ENCODE measurements at regions of chr14 and their contacts with region 1.

Region 1: GRCh38 chr14:75002392-75003249 is at the start of gene EIF2B2:
- DNase-seq: peak; percentile 97
- ATAC-seq: peak; percentile 96
- H3K4me3 Mint-ChIP-seq: peak within 1 kb of the TSS; percentile 99
- H3K27ac Mint-ChIP-seq: peak within 1 kb of the TSS; percentile 96
- H3K4me1 Mint-ChIP-seq: peaks cover 25% of the 10 kb centered on the region
- H3K27me3 Mint-ChIP-seq: no peaks in the 10 kb centered on the region
- CTCF ChIP-seq: no peak
- total RNA-seq, gene EIF2B2: 36.6 and 37.2 TPM in 2 replicates

Region 2: DNA sequence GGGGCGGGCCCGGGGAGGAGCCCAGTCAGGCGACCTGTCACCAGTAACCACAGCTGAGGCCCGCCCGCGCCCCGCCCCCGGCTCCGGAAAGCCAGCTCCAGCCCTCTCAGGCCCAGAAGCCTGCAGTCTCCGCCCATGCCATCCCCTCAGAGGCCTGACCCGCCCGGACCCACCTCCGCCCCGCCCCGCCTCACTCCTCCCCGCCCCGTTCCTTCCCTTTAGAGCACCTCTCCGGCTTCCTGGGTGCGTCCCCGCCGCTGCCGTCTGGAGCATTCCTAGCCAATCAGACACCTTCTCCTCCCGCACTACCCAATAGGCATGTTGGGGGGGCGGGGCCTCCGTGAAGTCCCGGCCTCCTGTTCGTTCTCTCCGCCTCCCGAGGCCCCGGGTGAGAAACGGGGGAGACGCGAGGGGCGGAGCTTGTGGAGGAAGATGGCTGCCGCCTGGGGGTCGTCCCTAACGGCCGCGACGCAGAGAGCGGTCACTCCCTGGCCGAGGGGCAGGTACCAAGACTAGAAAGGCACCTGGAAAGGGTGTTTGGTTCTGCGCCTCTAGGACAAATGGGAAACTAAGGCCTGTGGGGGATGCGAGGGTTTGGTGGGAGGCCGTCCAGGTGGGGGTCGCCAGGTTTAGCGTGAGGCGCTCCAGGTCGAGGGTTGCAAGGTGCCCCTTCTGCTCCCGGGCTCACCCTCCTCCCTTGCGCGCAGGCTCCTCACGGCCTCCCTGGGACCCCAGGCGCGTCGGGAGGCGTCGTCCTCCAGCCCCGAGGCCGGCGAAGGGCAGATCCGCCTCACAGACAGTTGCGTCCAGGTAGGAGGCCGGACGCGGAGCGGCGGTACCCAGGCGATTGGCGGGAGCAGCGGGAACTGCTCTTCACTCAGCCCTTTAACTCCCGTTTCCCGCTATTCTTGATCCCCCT is 509.0 kb before region 1 on chr14 and contains the start of gene ISCA2:
- CTCF ChIA-PET with region 1: no interaction called
- POLR2A ChIA-PET with region 1: no interaction called
- intact Hi-C with region 1: loop called (anchors 1 kb)
- DNase-seq: peak; percentile 98
- ATAC-seq: peak; percentile 90
- H3K4me3 Mint-ChIP-seq: no peak within 1 kb of the TSS
- H3K27ac Mint-ChIP-seq: no peak within 1 kb of the TSS
- H3K4me1 Mint-ChIP-seq: peaks cover 34% of the 10 kb centered on the region
- H3K27me3 Mint-ChIP-seq: no peaks in the 10 kb centered on the region
- CTCF ChIP-seq: no peak
- total RNA-seq, gene ISCA2: 35.0 and 35.3 TPM in 2 replicates

Region 3: DNA sequence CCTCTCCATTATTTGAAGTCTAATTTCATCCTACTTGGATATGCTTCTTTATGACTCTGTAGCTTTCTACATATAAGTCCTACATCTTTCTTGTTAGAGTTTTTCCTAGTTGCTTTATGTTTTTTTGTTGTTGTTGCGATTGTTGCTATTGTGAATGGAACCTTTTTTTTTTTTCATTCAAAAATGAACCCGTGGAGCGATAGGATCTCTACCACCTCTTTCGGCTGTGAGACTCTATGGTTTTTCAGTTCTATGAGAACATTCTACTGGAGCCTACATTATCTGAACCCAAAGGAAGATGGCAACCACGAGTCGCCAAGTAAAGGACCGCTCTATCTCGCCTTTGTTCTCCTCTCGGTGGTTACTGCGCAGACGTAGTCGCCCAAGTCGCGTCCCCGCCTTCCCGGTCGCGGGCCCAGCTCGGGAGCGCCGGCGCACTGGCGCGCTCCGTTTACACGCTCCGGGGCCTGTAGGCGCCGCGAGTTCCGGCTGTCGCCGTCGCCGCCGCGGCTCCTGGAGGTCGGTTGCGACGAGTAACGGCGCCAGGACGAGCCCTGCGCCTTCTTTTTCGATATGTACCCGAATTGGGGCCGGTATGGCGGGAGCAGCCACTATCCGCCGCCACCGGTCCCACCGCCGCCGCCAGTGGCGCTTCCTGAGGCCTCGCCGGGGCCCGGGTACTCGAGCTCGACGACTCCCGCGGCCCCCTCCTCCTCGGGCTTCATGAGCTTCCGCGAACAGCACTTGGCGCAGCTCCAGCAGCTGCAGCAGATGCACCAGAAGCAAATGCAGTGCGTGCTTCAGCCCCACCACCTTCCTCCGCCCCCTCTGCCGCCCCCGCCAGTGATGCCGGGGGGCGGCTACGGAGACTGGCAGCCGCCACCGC is 239.5 kb before region 1 on chr14 and contains the start of gene YLPM1:
- CTCF ChIA-PET with region 1: no interaction called
- POLR2A ChIA-PET with region 1: interaction called, 6 read pairs
- intact Hi-C with region 1: loop called (anchors 1 kb)
- DNase-seq: peak; percentile 86
- ATAC-seq: peak; percentile 95
- H3K4me3 Mint-ChIP-seq: peak within 1 kb of the TSS; percentile 90
- H3K27ac Mint-ChIP-seq: peak within 1 kb of the TSS; percentile 90
- H3K4me1 Mint-ChIP-seq: peaks cover 55% of the 10 kb centered on the region
- H3K27me3 Mint-ChIP-seq: no peaks in the 10 kb centered on the region
- CTCF ChIP-seq: no peak
- total RNA-seq, gene YLPM1: 68.5 and 85.9 TPM in 2 replicates

Region 4: GRCh38 chr14:74913986-74914573 is 88.5 kb before region 1 on chr14:
- CTCF ChIA-PET with region 1: no interaction called
- POLR2A ChIA-PET with region 1: no interaction called
- intact Hi-C with region 1: loop called (anchors 1 kb)
- DNase-seq: no peak
- ATAC-seq: peak; percentile 50
- H3K4me3 Mint-ChIP-seq: no peak overlapping the region
- H3K27ac Mint-ChIP-seq: no peak overlapping the region
- H3K4me1 Mint-ChIP-seq: no peaks in the 10 kb centered on the region
- H3K27me3 Mint-ChIP-seq: no peaks in the 10 kb centered on the region
- CTCF ChIP-seq: no peak

Region 5: DNA sequence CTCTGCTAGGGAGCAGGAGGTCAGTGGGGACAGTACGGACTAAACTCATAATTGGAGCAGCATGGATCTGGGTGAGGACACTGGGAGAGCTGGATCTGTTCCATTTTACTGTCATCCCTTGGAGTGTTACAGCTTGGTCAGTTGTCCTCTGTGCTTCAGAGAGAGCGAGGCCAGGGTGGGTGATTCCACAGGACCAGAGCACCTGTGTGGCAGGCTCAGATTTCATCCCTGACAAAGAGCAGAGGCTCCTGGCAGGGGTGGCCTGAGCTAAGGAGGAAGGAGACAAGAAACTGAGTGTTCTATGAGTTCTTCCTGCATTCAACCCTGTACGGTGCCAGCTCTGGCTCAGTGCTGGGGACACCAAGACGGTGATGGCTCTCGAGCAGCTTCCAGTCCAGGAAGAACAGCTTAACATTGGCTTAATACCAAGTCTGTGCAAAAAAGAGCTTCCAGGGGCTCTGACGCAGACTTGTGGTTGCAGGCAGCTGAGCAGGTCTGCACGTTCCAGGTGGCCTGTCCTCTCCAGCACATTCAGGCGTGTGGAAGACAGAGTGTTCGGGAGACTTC is 38.8 kb before region 1 on chr14:
- CTCF ChIA-PET with region 1: no interaction called
- POLR2A ChIA-PET with region 1: interaction called, 7 read pairs
- intact Hi-C with region 1: loop called (anchors 5 kb)
- DNase-seq: no peak
- ATAC-seq: no peak
- H3K4me3 Mint-ChIP-seq: no peak overlapping the region
- H3K27ac Mint-ChIP-seq: no peak overlapping the region
- H3K4me1 Mint-ChIP-seq: peaks cover 20% of the 10 kb centered on the region
- H3K27me3 Mint-ChIP-seq: no peaks in the 10 kb centered on the region
- CTCF ChIP-seq: no peak

Region 6: GRCh38 chr14:76151398-76152339 is 1149.0 kb after region 1 on chr14 and contains the start of gene GPATCH2L:
- CTCF ChIA-PET with region 1: no interaction called
- POLR2A ChIA-PET with region 1: no interaction called
- intact Hi-C with region 1: loop called (anchors 5 kb)
- DNase-seq: peak; percentile 97
- ATAC-seq: peak; percentile 93
- H3K4me3 Mint-ChIP-seq: peak within 1 kb of the TSS; percentile 97
- H3K27ac Mint-ChIP-seq: peak within 1 kb of the TSS; percentile 94
- H3K4me1 Mint-ChIP-seq: peaks cover 53% of the 10 kb centered on the region
- H3K27me3 Mint-ChIP-seq: no peaks in the 10 kb centered on the region
- CTCF ChIP-seq: no peak
- total RNA-seq, gene GPATCH2L: 64.8 and 82.3 TPM in 2 replicates

Measured in activated B cell treated with CpG ODN at 0.5 μM for 24 hours (primary cell).